Panc1 (cell line): ENCODE measurements at regions of chr10 and their contacts with region 1.

Region 1: DNA sequence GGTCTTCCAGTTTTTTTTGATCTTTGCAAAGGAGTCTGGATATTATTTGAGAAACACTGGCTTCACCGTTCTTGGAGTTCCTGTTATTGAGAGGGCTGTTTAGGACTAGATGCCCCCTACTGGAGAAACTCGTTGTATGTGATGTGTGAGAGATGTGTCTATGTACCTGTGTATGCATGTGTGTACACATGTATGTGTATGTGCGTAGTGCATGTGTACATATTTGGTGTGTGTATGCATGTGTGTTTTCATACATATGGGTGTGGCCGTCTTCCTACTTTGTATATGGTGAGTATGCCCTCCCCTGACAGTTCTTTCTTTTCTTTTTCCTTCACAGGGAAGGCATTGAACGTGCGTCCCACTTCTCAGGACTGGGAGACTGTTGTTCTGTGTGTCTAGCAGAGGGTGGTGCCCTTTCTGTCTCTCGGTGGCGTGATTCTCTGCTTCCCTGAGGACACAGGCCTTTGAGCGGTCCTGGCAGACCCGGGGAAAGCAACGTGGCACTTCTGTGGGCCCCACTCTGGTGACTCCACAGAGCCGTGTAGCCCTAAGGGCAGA is 3.0 kb upstream of the CALHM3 start:
- DNase-seq: peak; percentile 41
- ATAC-seq: peak; percentile 78
- H3K4me3 ChIP-seq: no peak overlapping the region
- H3K27ac ChIP-seq: no peak overlapping the region
- H3K4me1 ChIP-seq: no peaks in the 10 kb centered on the region; the same call in 1 of the 2 replicates
- H3K27me3 ChIP-seq: no peaks in the 10 kb centered on the region
- CTCF ChIP-seq: peak; percentile 83

Region 2: GRCh38 chr10:103062604-103063590 is 419.2 kb before region 1 on chr10:
- CTCF ChIA-PET with region 1: interaction called, 15 read pairs
- POLR2A ChIA-PET with region 1: no interaction called
- in situ Hi-C with region 1: no loop called
- intact Hi-C with region 1: no loop called
- DNase-seq: no peak
- ATAC-seq: peak; percentile 83
- H3K4me3 ChIP-seq: no peak overlapping the region
- H3K27ac ChIP-seq: no peak overlapping the region
- H3K4me1 ChIP-seq: no peaks in the 10 kb centered on the region
- H3K27me3 ChIP-seq: no peaks in the 10 kb centered on the region
- CTCF ChIP-seq: peak; percentile 57

Region 3: GRCh38 chr10:103416436-103417147 is 65.5 kb before region 1 on chr10:
- CTCF ChIA-PET with region 1: interaction called, 3 read pairs
- POLR2A ChIA-PET with region 1: no interaction called
- in situ Hi-C with region 1: no loop called
- intact Hi-C with region 1: loop called (anchors 2 kb)
- DNase-seq: peak; percentile 25
- ATAC-seq: peak; percentile 60; the same call in 1 of the 2 replicates
- H3K4me3 ChIP-seq: no peak overlapping the region
- H3K27ac ChIP-seq: no peak overlapping the region
- H3K4me1 ChIP-seq: no peaks in the 10 kb centered on the region
- H3K27me3 ChIP-seq: no peaks in the 10 kb centered on the region
- CTCF ChIP-seq: peak; percentile 78; the same call in 1 of the 2 replicates

Region 4: DNA sequence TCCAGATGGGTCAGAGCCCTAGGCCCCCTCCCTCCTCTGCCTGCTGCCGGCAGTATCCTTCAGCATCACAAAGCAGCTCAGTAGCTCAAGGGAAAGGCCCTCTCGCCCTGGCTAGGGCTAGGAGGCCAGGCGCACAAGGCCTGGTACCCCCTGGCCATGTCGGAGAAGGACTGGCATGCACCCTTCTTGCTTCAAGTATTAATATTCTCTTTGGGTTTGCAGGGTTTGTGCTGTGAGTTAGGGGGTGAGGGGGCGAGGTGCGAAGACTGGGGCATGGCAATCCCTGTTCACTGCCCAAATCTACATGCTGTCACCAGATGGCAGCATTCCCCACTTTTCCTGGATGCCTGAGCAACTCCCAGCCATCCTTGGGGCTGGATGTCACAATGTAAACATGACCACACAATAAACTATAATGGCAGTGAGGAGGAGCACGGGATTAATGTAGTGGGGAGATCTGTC is 116.6 kb after region 1 on chr10:
- CTCF ChIA-PET with region 1: no interaction called
- POLR2A ChIA-PET with region 1: interaction called, 20 read pairs
- in situ Hi-C with region 1: no loop called
- intact Hi-C with region 1: no loop called
- DNase-seq: peak; percentile 30
- ATAC-seq: peak; percentile 92
- H3K4me3 ChIP-seq: no peak overlapping the region
- H3K27ac ChIP-seq: no peak overlapping the region
- H3K4me1 ChIP-seq: no peaks in the 10 kb centered on the region; the same call in 1 of the 2 replicates
- H3K27me3 ChIP-seq: no peaks in the 10 kb centered on the region
- CTCF ChIP-seq: peak; percentile 91

Region 5: GRCh38 chr10:103800789-103801540 is 318.9 kb after region 1 on chr10:
- CTCF ChIA-PET with region 1: no interaction called
- POLR2A ChIA-PET with region 1: no interaction called
- in situ Hi-C with region 1: no loop called
- intact Hi-C with region 1: no loop called
- DNase-seq: no peak
- ATAC-seq: peak; percentile 80
- H3K4me3 ChIP-seq: no peak overlapping the region
- H3K27ac ChIP-seq: no peak overlapping the region; the same call in 1 of the 2 replicates
- H3K4me1 ChIP-seq: no peaks in the 10 kb centered on the region; the same call in 1 of the 2 replicates
- H3K27me3 ChIP-seq: no peaks in the 10 kb centered on the region
- CTCF ChIP-seq: no peak

Region 6: DNA sequence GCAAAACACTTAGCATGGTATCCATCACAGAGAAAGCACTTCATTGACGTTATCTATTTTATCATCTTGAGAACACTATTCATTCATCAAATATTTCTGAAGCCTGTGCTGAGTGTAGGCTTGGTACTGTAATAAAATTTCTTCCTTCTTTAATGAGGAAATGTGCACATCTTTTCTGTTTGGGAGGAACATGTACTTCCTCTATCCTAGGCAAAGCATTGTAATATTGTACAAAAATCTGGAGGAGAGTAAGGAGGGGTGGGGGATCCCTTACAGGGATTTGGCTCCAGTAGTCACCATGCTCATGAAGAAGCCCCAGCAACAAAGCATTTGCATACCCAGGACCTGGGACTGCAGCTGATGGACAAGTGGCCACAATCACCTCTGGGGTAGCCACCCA is 1119.1 kb after region 1 on chr10:
- CTCF ChIA-PET with region 1: no interaction called
- POLR2A ChIA-PET with region 1: no interaction called
- in situ Hi-C with region 1: no loop called
- intact Hi-C with region 1: no loop called
- DNase-seq: no peak
- ATAC-seq: no peak
- H3K4me3 ChIP-seq: no peak overlapping the region
- H3K27ac ChIP-seq: no peak overlapping the region
- H3K4me1 ChIP-seq: no peaks in the 10 kb centered on the region
- H3K27me3 ChIP-seq: peaks cover 12% of the 10 kb centered on the region
- CTCF ChIP-seq: no peak